Heart left ventricle (tissue), 16 donors: ENCODE measurements at regions of chr3 and their contacts with region 1.

Region 1: GRCh38 chr3:58332575-58333188 is at the start of gene PXK:
- DNase-seq: peak; percentile 84 to 92 (median 88)
- ATAC-seq: peak; percentile 78 to 97 (median 94)
- H3K4me3 ChIP-seq: peak within 1 kb of the TSS; percentile 57 to 98 (median 78)
- H3K27ac ChIP-seq: peak within 1 kb of the TSS; percentile 10 to 74 (median 63)
- H3K4me1 ChIP-seq: peaks cover 0 to 55% (median 20%) of the 10 kb centered on the region in 12 donors
- H3K27me3 ChIP-seq: no peaks in the 10 kb centered on the region
- CTCF ChIP-seq: peak in 4 of 12 donors; percentile 9 to 32 (median 18)
- POLR2A ChIP-seq: peak in 1 of 2 donors; percentile 61
- total RNA-seq, gene PXK: 8.2 to 24.3 (median 13.6) TPM

Region 2: DNA sequence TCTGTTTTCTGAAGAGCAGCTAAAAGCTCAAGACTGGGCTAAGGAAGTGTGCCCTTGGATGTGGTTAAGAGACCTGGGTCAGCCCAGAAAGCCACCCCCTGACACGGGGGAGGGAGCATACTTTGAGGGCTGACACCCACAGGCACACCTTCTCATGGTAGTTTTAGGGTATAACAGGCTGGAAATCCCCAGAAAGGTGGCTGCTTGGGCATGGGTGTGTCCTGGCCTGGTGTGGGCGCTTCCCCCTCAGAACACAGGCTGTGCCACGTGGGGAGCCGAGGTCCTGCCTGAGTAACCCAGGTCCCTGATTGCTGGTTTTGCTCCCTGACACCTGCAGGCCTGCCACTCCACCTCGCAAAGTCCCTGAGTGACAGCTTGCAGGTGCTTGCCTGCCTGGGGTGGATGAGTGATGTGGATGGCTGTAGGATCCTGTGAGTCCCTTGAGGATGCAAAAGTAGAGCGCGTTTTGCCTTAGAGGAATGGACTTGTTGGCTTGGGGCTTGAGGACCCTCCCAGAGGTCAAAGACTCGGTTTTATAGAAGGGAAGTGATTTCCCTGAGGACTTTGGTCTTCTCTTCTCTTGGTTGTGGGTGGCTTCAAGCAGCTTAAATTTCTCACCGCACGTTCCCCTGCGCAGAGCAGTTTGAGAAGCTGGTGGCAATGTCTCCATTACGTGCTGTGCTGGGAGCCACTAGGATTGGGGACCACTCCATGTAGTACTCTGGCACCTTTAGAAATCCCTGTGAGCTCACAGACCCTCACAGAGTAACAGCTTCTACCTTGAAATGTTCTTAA is 216.3 kb before region 1 on chr3:
- intact Hi-C with region 1: no loop called
- DNase-seq: no peak
- ATAC-seq: no peak
- H3K4me3 ChIP-seq: no peak overlapping the region
- H3K27ac ChIP-seq: peak overlapping the region in 4 of 12 donors; percentile 2 to 61 (median 41)
- H3K4me1 ChIP-seq: peaks cover 0 to 50% (median 29%) of the 10 kb centered on the region in 12 donors
- H3K27me3 ChIP-seq: no peaks in the 10 kb centered on the region
- CTCF ChIP-seq: no peak
- POLR2A ChIP-seq: no peak

Region 3: DNA sequence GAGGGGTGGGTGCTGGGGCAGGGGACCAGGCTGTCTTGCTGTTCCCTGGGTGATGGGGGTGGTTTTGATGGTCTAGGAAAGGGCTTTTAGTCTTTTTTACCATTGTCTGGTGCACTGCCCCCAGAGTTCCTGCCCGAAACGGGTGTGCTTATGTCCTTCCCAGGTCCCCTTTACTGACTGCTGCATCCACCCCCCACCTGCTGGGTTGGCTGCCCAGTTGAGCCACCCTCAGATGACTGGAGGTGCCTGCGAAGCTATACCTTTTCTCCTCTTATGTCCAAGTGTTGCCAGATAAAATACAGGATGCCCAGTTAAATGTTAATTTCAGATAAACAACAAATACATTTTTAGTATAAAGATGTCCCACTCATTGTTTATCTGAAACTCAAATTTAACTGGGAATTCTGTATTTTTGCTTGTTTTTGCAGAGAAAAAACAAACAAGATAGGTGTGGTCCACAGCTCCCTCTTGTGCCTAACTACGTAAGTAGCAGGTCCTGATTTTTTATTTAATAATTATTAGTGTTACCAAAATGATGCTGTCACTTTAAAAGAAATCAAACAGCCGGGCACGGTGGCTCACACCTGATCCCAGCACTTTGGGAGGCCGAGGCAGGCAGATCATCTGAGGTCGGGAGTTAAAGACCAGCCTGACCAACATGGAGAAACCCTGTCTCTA is 32.7 kb before region 1 on chr3:
- intact Hi-C with region 1: no loop called
- DNase-seq: no peak
- ATAC-seq: no peak
- H3K4me3 ChIP-seq: no peak overlapping the region
- H3K27ac ChIP-seq: no peak overlapping the region
- H3K4me1 ChIP-seq: peaks cover 0 to 2% (median 0%) of the 10 kb centered on the region in 12 donors
- H3K27me3 ChIP-seq: peaks cover 0 to 5% (median 0%) of the 10 kb centered on the region in 9 donors
- CTCF ChIP-seq: peak; percentile 31 to 74 (median 58)
- POLR2A ChIP-seq: no peak

Region 4: GRCh38 chr3:58388550-58389091 is 55.9 kb after region 1 on chr3:
- intact Hi-C with region 1: loop called in 1 of 10 experiments (anchors 2 kb)
- DNase-seq: no peak
- ATAC-seq: peak in 2 of 4 donors; percentile 48 to 49
- H3K4me3 ChIP-seq: no peak overlapping the region
- H3K27ac ChIP-seq: peak overlapping the region in 9 of 12 donors; percentile 13 to 76 (median 64)
- H3K4me1 ChIP-seq: peaks cover 0 to 62% (median 36%) of the 10 kb centered on the region in 12 donors
- H3K27me3 ChIP-seq: no peaks in the 10 kb centered on the region
- CTCF ChIP-seq: no peak
- POLR2A ChIP-seq: no peak

Region 5: DNA sequence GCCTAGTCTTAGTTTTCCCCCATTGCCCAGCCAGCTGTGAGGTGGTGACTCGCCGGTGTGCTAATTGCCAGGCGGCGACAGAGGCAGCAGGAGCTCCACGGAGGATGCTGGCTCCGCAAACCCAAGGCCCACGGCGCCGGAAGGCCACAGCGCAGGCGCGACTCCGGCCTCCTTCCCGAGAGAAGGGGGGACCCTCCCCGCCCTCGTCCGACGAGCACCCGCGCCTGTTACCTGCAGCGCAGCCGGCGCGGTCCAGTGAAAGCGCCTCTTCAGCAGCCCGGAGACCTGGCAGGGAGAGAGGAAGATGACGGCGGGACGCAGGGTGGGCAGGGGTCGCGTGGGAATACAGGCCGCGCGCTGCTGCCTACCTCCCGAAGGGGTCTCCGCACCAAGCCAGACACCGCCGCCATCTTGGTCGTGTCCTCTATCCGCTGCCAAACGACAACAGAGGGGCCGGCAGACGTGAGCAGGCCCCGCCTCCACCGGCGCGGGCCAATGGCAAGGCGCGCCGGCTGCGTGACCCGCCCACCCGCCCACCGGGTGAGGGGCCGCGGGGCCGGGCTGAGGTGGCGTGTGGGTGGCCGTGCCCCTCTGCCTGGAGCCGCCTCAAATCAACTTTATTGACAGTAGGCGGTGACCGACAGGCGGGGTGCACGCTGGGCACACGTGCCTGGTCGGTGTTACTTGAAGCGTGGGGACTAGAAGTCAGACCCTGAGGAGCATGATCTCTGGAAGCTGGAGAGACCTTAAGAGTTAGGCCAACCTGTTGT is 100.9 kb after region 1 on chr3 and contains the start of gene PDHB:
- intact Hi-C with region 1: loop called in 1 of 10 experiments (anchors 1 kb)
- DNase-seq: peak; percentile 93 to 96 (median 95)
- ATAC-seq: peak; percentile 95 to 99 (median 98)
- H3K4me3 ChIP-seq: peak within 1 kb of the TSS; percentile 44 to 87 (median 76)
- H3K27ac ChIP-seq: peak within 1 kb of the TSS; percentile 87 to 97 (median 92)
- H3K4me1 ChIP-seq: peaks cover 2 to 35% (median 24%) of the 10 kb centered on the region in 12 donors
- H3K27me3 ChIP-seq: no peaks in the 10 kb centered on the region
- CTCF ChIP-seq: peak in 1 of 12 donors; percentile 6
- POLR2A ChIP-seq: peak in 1 of 2 donors; percentile 79
- total RNA-seq, gene PDHB: 154 to 274 (median 192) TPM